CD4-positive, alpha-beta T cell (primary cell): ENCODE measurements at regions of chr5 and their contacts with region 1.

Region 1: GRCh38 chr5:98827161-98827560 is 53.7 kb downstream of the RGMB start:
- DNase-seq: peak in 3 of 14 experiments; percentile 30 to 45 (median 37)
- ATAC-seq: no peak
- H3K4me3 ChIP-seq: no peak overlapping the region
- H3K4me3 Mint-ChIP-seq: no peak overlapping the region
- H3K27ac ChIP-seq: no peak overlapping the region
- H3K27ac Mint-ChIP-seq: no peak overlapping the region
- H3K4me1 ChIP-seq: no peaks in the 10 kb centered on the region
- H3K4me1 Mint-ChIP-seq: no peaks in the 10 kb centered on the region
- H3K27me3 ChIP-seq: no peaks in the 10 kb centered on the region
- H3K27me3 Mint-ChIP-seq: no peaks in the 10 kb centered on the region
- CTCF ChIP-seq: peak; percentile 40

Region 2: DNA sequence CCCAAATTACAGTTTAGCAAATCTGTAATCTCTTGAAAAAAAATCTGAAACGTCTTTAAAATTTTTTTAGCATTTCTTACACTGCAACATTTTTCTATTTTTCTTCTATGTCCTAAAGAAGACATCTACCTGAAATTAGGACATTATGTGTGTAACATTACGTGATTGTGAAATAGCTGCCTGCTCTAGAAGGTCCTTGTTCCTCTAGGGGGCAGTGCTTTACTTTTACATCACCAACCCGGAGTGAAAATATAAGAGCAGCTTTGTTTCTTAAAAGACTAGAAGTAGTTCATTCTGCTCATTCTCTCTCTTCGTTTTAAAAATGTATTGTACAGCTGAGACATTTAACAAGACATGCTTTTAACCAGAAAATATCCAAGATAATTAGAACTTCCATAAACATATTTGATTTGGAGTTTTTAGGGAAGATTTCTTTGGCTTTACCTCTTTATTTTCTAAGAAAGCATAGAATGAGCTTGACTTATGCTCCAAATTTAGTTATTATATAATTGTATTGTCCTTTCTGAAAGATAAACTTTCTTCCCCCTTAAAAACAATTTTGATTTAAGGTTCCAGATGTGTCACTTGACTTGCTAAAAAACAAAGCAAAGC is 1596.0 kb before region 1 on chr5:
- CTCF ChIA-PET with region 1: no interaction called
- POLR2A ChIA-PET with region 1: no interaction called
- intact Hi-C with region 1: loop called (anchors 5 to 10 kb)
- DNase-seq: peak in 7 of 14 experiments; percentile 5 to 66 (median 17)
- ATAC-seq: peak; percentile 43
- H3K4me3 ChIP-seq: no peak overlapping the region
- H3K4me3 Mint-ChIP-seq: no peak overlapping the region
- H3K27ac ChIP-seq: no peak overlapping the region
- H3K27ac Mint-ChIP-seq: no peak overlapping the region
- H3K4me1 ChIP-seq: no peaks in the 10 kb centered on the region
- H3K4me1 Mint-ChIP-seq: no peaks in the 10 kb centered on the region
- H3K27me3 ChIP-seq: peaks cover 0 to 6% of the 10 kb centered on the region in 2 experiments
- H3K27me3 Mint-ChIP-seq: peaks cover 10% of the 10 kb centered on the region
- CTCF ChIP-seq: peak; percentile 73

Region 3: GRCh38 chr5:98296426-98296825 is 530.7 kb before region 1 on chr5:
- CTCF ChIA-PET with region 1: no interaction called
- POLR2A ChIA-PET with region 1: no interaction called
- intact Hi-C with region 1: no loop called
- DNase-seq: no peak
- ATAC-seq: no peak
- H3K4me3 ChIP-seq: no peak overlapping the region
- H3K4me3 Mint-ChIP-seq: no peak overlapping the region
- H3K27ac ChIP-seq: no peak overlapping the region
- H3K27ac Mint-ChIP-seq: no peak overlapping the region
- H3K4me1 ChIP-seq: no peaks in the 10 kb centered on the region
- H3K4me1 Mint-ChIP-seq: no peaks in the 10 kb centered on the region
- H3K27me3 ChIP-seq: no peaks in the 10 kb centered on the region
- H3K27me3 Mint-ChIP-seq: no peaks in the 10 kb centered on the region
- CTCF ChIP-seq: no peak